Activated CD4-positive, alpha-beta memory T cell treated with anti-CD3 and anti-CD28 coated beads, Interleukin-2, amount 10 ng/mL, durations not matched to agents 7 days and 5 days (primary cell): ENCODE measurements at regions of chr4 and their contacts with region 1.

Region 1: GRCh38 chr4:39134683-39135319 is 47.5 kb upstream of the WDR19 start:
- DNase-seq: no peak
- H3K4me3 Mint-ChIP-seq: no peak overlapping the region
- H3K27ac Mint-ChIP-seq: no peak overlapping the region
- H3K4me1 Mint-ChIP-seq: peaks cover 15% of the 10 kb centered on the region
- H3K27me3 Mint-ChIP-seq: no peaks in the 10 kb centered on the region

Region 2: DNA sequence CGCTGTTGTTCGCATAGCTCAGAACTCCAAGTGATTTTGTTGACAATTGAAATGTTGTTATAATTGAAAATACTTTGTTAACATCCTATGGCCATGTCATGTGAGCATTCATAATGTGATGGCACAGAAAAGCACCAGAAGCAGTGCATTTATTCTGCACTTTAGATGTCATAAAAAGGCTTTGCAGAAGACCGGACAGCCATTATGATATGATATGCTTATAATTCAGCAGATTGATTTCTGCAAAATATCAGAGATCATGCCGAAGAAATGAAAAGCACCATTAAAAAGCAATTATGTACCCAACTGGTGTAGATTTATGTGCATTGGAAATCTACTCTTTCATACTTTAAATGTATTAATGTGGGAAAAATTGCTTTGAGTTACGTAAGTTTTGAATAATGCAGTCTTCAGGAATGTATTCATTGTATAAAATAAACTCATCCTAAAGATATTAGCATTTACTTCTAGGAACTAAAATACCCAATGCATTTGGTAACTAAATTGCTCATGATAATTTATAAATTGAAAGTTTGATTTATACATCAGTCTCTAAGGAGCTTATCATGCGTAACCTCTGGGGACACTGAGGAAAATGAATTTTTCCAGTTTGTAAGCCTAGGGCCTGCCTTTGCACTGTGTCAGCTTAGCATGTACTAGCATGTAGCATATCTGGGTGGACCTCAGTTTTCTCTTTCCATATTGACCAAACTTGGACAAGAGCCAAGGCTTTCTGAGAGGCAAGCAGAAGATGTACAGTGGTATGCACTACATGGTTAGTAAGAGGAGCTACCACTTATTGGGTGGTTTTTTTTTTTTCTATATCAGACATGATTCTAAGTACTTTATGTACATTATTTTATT is 395.6 kb before region 1 on chr4:
- CTCF ChIA-PET with region 1: no interaction called
- POLR2A ChIA-PET with region 1: no interaction called
- DNase-seq: no peak
- H3K4me3 Mint-ChIP-seq: no peak overlapping the region
- H3K27ac Mint-ChIP-seq: no peak overlapping the region
- H3K4me1 Mint-ChIP-seq: peaks cover 5% of the 10 kb centered on the region
- H3K27me3 Mint-ChIP-seq: peaks cover 22% of the 10 kb centered on the region

Region 3: DNA sequence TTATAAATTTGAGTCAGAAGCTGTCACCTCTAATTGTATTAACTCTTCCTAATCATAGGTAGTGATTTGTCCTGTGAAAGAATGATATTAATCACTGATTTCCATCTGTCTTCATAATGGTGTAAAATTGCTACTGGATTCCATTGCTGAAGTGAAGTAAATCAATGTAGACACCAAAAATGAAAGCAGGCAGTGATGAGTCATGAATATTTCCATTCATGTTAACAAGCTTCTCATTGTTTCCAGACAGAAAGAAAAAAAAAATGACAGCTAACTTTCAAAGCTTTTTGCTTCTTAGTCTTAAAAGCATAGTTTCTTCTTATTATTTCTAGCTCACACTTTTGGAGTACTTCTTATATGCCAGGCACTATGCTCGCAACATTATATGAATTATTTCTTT is 245.7 kb before region 1 on chr4:
- CTCF ChIA-PET with region 1: interaction called, 39 read pairs
- POLR2A ChIA-PET with region 1: no interaction called
- DNase-seq: no peak
- H3K4me3 Mint-ChIP-seq: no peak overlapping the region
- H3K27ac Mint-ChIP-seq: peak overlapping the region; percentile 8
- H3K4me1 Mint-ChIP-seq: peaks cover 15% of the 10 kb centered on the region
- H3K27me3 Mint-ChIP-seq: no peaks in the 10 kb centered on the region

Region 4: DNA sequence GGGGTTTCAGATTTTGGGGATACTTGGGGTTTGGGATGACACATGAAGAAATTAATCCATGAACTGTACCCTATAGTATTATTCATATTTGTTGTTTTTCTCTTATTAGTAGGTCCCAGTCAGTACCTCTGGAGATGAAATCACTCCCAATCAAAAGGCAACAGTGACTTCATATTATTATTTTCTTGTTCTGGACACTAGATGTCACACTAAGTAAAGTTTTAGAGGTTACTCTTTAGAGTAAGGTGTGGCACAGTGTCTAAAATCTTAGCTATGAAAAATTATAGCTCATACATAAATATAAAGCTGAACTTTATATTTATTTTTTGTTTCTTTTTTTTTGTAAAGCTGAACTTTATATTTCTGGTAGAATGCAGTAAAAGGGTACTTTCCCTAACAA is 232.1 kb before region 1 on chr4:
- CTCF ChIA-PET with region 1: interaction called, 113 read pairs
- POLR2A ChIA-PET with region 1: interaction called, 4 read pairs
- DNase-seq: no peak
- H3K4me3 Mint-ChIP-seq: no peak overlapping the region
- H3K27ac Mint-ChIP-seq: no peak overlapping the region
- H3K4me1 Mint-ChIP-seq: peaks cover 6% of the 10 kb centered on the region
- H3K27me3 Mint-ChIP-seq: peaks cover 7% of the 10 kb centered on the region

Region 5: DNA sequence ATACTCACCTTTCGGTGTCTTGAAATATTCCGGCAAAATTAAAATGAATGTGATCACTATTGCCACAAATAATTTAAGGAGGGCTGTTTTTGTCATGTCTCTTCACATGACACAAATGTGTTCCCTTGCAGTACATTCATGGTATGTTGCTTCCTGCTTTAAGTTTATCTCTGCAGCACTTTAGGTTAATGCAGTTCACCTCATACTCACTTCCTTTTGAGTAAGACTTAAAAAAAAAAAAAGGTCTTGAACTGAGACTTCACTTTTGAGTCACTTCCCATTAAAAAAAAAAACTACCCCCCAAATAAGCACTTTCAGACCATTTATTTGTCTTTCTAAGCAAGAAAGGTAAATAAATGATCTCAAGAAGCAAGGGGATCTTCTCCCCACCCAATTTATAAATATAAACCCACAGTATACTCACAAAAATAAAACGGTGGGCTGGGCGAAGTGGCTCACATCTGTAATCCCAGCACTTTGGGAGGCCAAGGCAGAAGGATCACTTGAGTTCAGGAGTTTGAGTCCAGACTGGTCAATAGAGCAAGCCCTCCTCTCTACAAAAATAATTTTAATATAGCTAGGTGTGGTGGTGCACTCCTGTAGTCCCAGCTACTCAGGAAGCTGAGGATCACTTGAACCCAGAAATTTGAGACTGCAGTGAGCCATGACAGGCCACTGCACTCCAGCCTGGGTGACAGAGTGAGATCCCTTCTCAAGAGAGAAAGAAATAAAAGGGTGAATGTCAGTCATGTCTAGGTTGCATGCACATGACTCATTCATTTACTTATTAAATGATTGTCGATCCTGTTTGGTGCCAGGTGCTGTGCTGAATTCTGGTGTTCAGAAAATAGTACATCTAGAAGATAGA is 102.3 kb before region 1 on chr4 and contains the start of gene TMEM156:
- CTCF ChIA-PET with region 1: interaction called, 12 read pairs
- POLR2A ChIA-PET with region 1: no interaction called
- DNase-seq: peak; percentile 46
- H3K4me3 Mint-ChIP-seq: peak within 1 kb of the TSS; percentile 79
- H3K27ac Mint-ChIP-seq: peak within 1 kb of the TSS; percentile 77
- H3K4me1 Mint-ChIP-seq: peaks cover 34% of the 10 kb centered on the region
- H3K27me3 Mint-ChIP-seq: no peaks in the 10 kb centered on the region
- total RNA-seq, gene TMEM156: 27.6 to 28.2 TPM

Region 6: DNA sequence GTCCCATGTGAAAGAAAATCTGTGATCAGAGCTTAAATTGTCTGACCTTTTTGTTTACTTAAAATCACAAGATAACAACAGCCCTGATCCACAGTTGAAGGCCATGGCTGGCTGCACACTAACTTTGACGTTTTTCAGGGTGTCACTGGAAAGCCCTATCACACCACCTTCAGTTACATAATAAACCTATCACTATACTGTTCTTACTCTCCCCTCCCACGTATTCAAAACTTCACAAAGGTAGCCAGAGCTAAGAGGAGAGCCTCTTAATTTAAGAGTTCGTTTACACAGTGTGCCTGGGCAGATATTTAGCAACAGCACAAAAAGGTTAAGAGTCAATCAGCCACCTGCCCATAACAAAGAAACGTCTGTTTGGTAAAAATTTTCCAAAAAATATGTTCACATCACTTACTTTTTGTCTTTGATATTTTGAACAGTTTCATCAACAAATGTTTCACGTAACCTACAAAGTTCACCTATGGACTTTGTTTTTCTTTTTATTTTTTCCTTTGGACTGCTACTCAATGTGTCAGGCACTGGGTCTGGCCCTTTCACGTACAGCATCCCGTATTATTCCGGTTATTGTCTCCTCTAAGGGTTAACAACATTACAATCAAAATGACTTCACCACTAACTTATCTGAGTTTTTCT is 206.4 kb after region 1 on chr4:
- CTCF ChIA-PET with region 1: no interaction called
- POLR2A ChIA-PET with region 1: no interaction called
- DNase-seq: no peak
- H3K4me3 Mint-ChIP-seq: no peak overlapping the region
- H3K27ac Mint-ChIP-seq: no peak overlapping the region
- H3K4me1 Mint-ChIP-seq: peaks cover 9% of the 10 kb centered on the region
- H3K27me3 Mint-ChIP-seq: no peaks in the 10 kb centered on the region